ENCODE measurements at regions of chr17 and their contacts with region 1.

Region 1: GRCh38 chr17:39401412-39402243 is at the start of gene FBXL20:
- DNase-seq: peak; percentile 90 to 96 (median 94)
- ATAC-seq: peak; percentile 78
- H3K4me3 ChIP-seq: peak within 1 kb of the TSS; percentile 89 to 96
- H3K4me3 Mint-ChIP-seq: peak within 1 kb of the TSS; percentile 98
- H3K27ac ChIP-seq: peak within 1 kb of the TSS; percentile 78 to 82
- H3K27ac Mint-ChIP-seq: peak within 1 kb of the TSS; percentile 97
- H3K4me1 ChIP-seq: peaks cover 14% of the 10 kb centered on the region
- H3K4me1 Mint-ChIP-seq: peaks cover 39% of the 10 kb centered on the region
- H3K27me3 ChIP-seq: no peaks in the 10 kb centered on the region
- H3K27me3 Mint-ChIP-seq: no peaks in the 10 kb centered on the region
- CTCF ChIP-seq: no peak
- total RNA-seq, gene FBXL20: 12.1 to 14.0 TPM

Region 2: GRCh38 chr17:38702166-38702899 is 699.3 kb before region 1 on chr17:
- CTCF ChIA-PET with region 1: no interaction called
- POLR2A ChIA-PET with region 1: no interaction called
- intact Hi-C with region 1: loop called in 1 of 2 experiments (anchors 5 kb)
- DNase-seq: peak; percentile 58 to 91 (median 78)
- ATAC-seq: peak; percentile 27
- H3K4me3 ChIP-seq: peak overlapping the region; percentile 96 to 97
- H3K4me3 Mint-ChIP-seq: peak overlapping the region; percentile 99
- H3K27ac ChIP-seq: peak overlapping the region; percentile 70 to 94
- H3K27ac Mint-ChIP-seq: peak overlapping the region; percentile 97
- H3K4me1 ChIP-seq: peaks cover 33% of the 10 kb centered on the region
- H3K4me1 Mint-ChIP-seq: peaks cover 51% of the 10 kb centered on the region
- H3K27me3 ChIP-seq: no peaks in the 10 kb centered on the region
- H3K27me3 Mint-ChIP-seq: no peaks in the 10 kb centered on the region
- CTCF ChIP-seq: no peak

Region 3: GRCh38 chr17:38898812-38899348 is 502.7 kb before region 1 on chr17:
- CTCF ChIA-PET with region 1: no interaction called
- POLR2A ChIA-PET with region 1: no interaction called
- intact Hi-C with region 1: loop called in 1 of 2 experiments (anchors 10 kb)
- DNase-seq: peak; percentile 59 to 94 (median 88)
- ATAC-seq: peak; percentile 81
- H3K4me3 ChIP-seq: peak overlapping the region; percentile 25 to 49
- H3K4me3 Mint-ChIP-seq: peak overlapping the region; percentile 77
- H3K27ac ChIP-seq: peak overlapping the region; percentile 56 to 94
- H3K27ac Mint-ChIP-seq: peak overlapping the region; percentile 95
- H3K4me1 ChIP-seq: peaks cover 78% of the 10 kb centered on the region
- H3K4me1 Mint-ChIP-seq: peaks cover 73% of the 10 kb centered on the region
- H3K27me3 ChIP-seq: no peaks in the 10 kb centered on the region
- H3K27me3 Mint-ChIP-seq: no peaks in the 10 kb centered on the region
- CTCF ChIP-seq: no peak

Region 4: DNA sequence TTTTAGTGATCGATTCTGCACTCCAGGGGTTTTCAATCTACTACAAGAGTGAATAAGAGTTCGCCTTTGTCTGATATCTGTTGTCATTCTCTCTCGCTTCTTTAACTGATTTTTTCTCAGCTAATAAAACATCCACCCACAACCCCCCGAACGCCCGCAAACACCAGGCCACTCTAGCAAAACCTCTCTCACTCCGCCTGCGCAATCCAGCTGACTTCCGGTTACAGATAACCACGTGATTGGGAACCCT is 201.9 kb before region 1 on chr17:
- CTCF ChIA-PET with region 1: no interaction called
- POLR2A ChIA-PET with region 1: no interaction called
- intact Hi-C with region 1: loop called in 1 of 2 experiments (anchors 2 kb)
- DNase-seq: peak; percentile 70 to 96 (median 86)
- ATAC-seq: peak; percentile 61
- H3K4me3 ChIP-seq: peak overlapping the region; percentile 77 to 87
- H3K4me3 Mint-ChIP-seq: peak overlapping the region; percentile 95
- H3K27ac ChIP-seq: peak overlapping the region; percentile 94 to 98
- H3K27ac Mint-ChIP-seq: peak overlapping the region; percentile 100
- H3K4me1 ChIP-seq: peaks cover 56% of the 10 kb centered on the region
- H3K4me1 Mint-ChIP-seq: peaks cover 69% of the 10 kb centered on the region
- H3K27me3 ChIP-seq: no peaks in the 10 kb centered on the region
- H3K27me3 Mint-ChIP-seq: no peaks in the 10 kb centered on the region
- CTCF ChIP-seq: no peak

Region 5: GRCh38 chr17:39209317-39210092 is 192.1 kb before region 1 on chr17:
- CTCF ChIA-PET with region 1: no interaction called
- POLR2A ChIA-PET with region 1: no interaction called
- intact Hi-C with region 1: loop called in 1 of 2 experiments (anchors 2 kb)
- DNase-seq: peak; percentile 35 to 86 (median 79)
- ATAC-seq: peak; percentile 84
- H3K4me3 ChIP-seq: peak overlapping the region; percentile 34 to 49
- H3K4me3 Mint-ChIP-seq: peak overlapping the region; percentile 66
- H3K27ac ChIP-seq: peak overlapping the region; percentile 19 to 60
- H3K27ac Mint-ChIP-seq: peak overlapping the region; percentile 73
- H3K4me1 ChIP-seq: peaks cover 35% of the 10 kb centered on the region
- H3K4me1 Mint-ChIP-seq: peaks cover 31% of the 10 kb centered on the region
- H3K27me3 ChIP-seq: peaks cover 0 to 5% of the 10 kb centered on the region in 2 experiments
- H3K27me3 Mint-ChIP-seq: no peaks in the 10 kb centered on the region
- CTCF ChIP-seq: no peak

Region 6: DNA sequence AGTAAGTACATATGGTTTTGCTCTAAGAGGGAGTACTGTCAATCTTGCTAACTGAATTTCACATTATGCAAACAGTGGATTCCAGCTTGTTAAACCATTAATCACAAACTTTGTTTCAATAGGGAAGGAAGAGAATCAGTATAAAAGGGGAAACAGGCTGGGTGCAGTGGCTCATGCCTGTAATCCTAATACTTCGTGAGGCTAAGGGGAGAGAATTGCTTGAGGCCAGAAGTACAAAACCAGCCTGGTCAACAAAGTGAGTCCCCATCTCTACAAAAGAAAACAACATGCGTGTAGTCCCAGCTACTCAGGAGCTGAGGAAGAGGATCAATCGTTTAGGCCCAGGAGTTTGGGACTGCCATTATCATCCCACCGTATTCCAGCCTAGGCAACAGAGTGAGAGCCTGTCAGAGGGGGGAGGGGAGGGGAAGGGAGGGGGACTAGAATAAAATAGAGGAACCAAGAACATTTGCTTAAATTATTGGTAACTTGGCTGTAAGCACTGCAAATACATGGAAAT is 65.9 kb before region 1 on chr17:
- CTCF ChIA-PET with region 1: no interaction called
- POLR2A ChIA-PET with region 1: no interaction called
- intact Hi-C with region 1: no loop called
- DNase-seq: no peak
- ATAC-seq: no peak
- H3K4me3 ChIP-seq: no peak overlapping the region
- H3K4me3 Mint-ChIP-seq: no peak overlapping the region
- H3K27ac ChIP-seq: no peak overlapping the region
- H3K27ac Mint-ChIP-seq: no peak overlapping the region
- H3K4me1 ChIP-seq: no peaks in the 10 kb centered on the region
- H3K4me1 Mint-ChIP-seq: no peaks in the 10 kb centered on the region
- H3K27me3 ChIP-seq: no peaks in the 10 kb centered on the region
- H3K27me3 Mint-ChIP-seq: no peaks in the 10 kb centered on the region
- CTCF ChIP-seq: no peak

Region 7: GRCh38 chr17:39450847-39451581 is 49.4 kb after region 1 on chr17 and contains the start of gene MED1:
- CTCF ChIA-PET with region 1: no interaction called
- POLR2A ChIA-PET with region 1: interaction called, 7 read pairs
- intact Hi-C with region 1: loop called (anchors 1 to 2 kb)
- DNase-seq: peak; percentile 80 to 98 (median 89)
- ATAC-seq: peak; percentile 91
- H3K4me3 ChIP-seq: peak within 1 kb of the TSS; percentile 71 to 98
- H3K4me3 Mint-ChIP-seq: peak within 1 kb of the TSS; percentile 98
- H3K27ac ChIP-seq: peak within 1 kb of the TSS; percentile 86 to 87
- H3K27ac Mint-ChIP-seq: peak within 1 kb of the TSS; percentile 98
- H3K4me1 ChIP-seq: peaks cover 17% of the 10 kb centered on the region
- H3K4me1 Mint-ChIP-seq: peaks cover 27% of the 10 kb centered on the region
- H3K27me3 ChIP-seq: no peaks in the 10 kb centered on the region
- H3K27me3 Mint-ChIP-seq: no peaks in the 10 kb centered on the region
- CTCF ChIP-seq: no peak
- total RNA-seq, gene MED1: 35.1 to 37.3 TPM

Region 8: GRCh38 chr17:39461113-39461925 is 59.7 kb after region 1 on chr17 and contains the start of gene CDK12:
- CTCF ChIA-PET with region 1: interaction called, 3 read pairs
- POLR2A ChIA-PET with region 1: interaction called, 13 read pairs
- intact Hi-C with region 1: loop called (anchors 1 to 2 kb)
- DNase-seq: peak; percentile 90 to 99 (median 94)
- ATAC-seq: peak; percentile 86
- H3K4me3 ChIP-seq: peak within 1 kb of the TSS; percentile 75 to 84
- H3K4me3 Mint-ChIP-seq: peak within 1 kb of the TSS; percentile 95
- H3K27ac ChIP-seq: peak within 1 kb of the TSS; percentile 81 to 91
- H3K27ac Mint-ChIP-seq: peak within 1 kb of the TSS; percentile 96
- H3K4me1 ChIP-seq: peaks cover 21% of the 10 kb centered on the region
- H3K4me1 Mint-ChIP-seq: peaks cover 42% of the 10 kb centered on the region
- H3K27me3 ChIP-seq: no peaks in the 10 kb centered on the region
- H3K27me3 Mint-ChIP-seq: no peaks in the 10 kb centered on the region
- CTCF ChIP-seq: no peak
- total RNA-seq, gene CDK12: 95.5 to 101 TPM